MCF 10A (cell line): ENCODE measurements at regions of chr9 and their contacts with region 1.

Region 1: GRCh38 chr9:112333639-112334431 is 416 bp upstream of the PTBP3 start:
- DNase-seq: peak; percentile 94
- H3K4me3 Mint-ChIP-seq: peak overlapping the region; percentile 94
- H3K27ac Mint-ChIP-seq: peak overlapping the region; percentile 94
- H3K4me1 Mint-ChIP-seq: peaks cover 13% of the 10 kb centered on the region
- H3K27me3 Mint-ChIP-seq: no peaks in the 10 kb centered on the region
- CTCF ChIP-seq: peak; percentile 35

Region 2: DNA sequence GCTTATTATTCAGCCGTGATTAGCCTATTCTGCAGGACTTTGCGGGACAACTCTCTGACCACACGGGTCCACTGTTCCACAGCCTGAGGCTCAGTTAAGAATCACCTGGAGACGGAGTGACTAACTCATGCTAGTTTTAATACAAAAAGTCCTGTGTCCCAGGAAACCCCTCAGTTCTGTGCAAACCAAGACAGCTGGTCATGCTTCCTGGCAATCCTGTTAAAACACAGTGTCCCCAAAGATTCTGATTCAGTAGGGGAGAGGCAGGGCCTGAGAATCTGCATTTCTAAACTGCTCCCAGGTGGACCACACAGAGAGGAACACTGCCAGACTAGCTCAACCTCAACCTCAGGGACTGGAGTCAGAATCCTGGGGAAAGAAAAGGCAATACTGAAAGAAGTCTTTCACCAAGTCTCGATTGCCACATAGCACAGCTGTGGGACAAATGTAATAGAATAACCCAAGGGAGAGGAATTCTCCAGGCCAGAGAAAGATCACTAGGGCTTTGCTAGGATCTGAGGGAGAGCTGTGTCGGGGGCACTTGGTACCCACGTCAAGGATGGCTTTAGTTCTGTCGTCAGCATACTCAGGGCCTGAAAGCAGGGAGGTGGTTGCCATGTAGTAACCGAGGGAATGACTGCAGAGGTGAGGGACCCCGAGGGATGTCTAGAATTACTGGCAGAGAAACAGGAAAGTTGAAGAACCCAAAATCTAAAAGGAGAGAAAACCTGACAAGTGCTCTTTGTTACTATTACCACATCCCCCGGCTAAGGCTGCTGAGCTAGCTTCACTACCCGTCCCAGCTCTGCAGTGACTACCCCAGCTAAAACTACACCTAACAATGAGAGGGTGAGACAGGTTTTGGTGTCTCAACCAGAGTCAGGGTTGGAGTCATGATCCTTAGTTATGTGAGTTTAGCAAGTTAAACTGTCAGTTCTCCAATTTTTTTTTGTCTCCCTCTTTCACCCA is 167.4 kb before region 1 on chr9:
- CTCF ChIA-PET with region 1: no interaction called
- POLR2A ChIA-PET with region 1: interaction called, 4 read pairs
- intact Hi-C with region 1: loop called (anchors 1 kb)
- DNase-seq: peak; percentile 66
- H3K4me3 Mint-ChIP-seq: no peak overlapping the region
- H3K27ac Mint-ChIP-seq: peak overlapping the region; percentile 55
- H3K4me1 Mint-ChIP-seq: peaks cover 16% of the 10 kb centered on the region
- H3K27me3 Mint-ChIP-seq: no peaks in the 10 kb centered on the region
- CTCF ChIP-seq: peak; percentile 19

Region 3: GRCh38 chr9:112233768-112234167 is 100.1 kb before region 1 on chr9:
- CTCF ChIA-PET with region 1: interaction called, 4 read pairs
- POLR2A ChIA-PET with region 1: interaction called, 20 read pairs
- intact Hi-C with region 1: loop called (anchors 2 kb)
- DNase-seq: peak; percentile 87
- H3K4me3 Mint-ChIP-seq: no peak overlapping the region
- H3K27ac Mint-ChIP-seq: peak overlapping the region; percentile 81
- H3K4me1 Mint-ChIP-seq: peaks cover 11% of the 10 kb centered on the region
- H3K27me3 Mint-ChIP-seq: no peaks in the 10 kb centered on the region
- CTCF ChIP-seq: no peak

Region 4: GRCh38 chr9:112315331-112316257 is 18.2 kb before region 1 on chr9:
- CTCF ChIA-PET with region 1: interaction called, 4 read pairs
- POLR2A ChIA-PET with region 1: interaction called, 50 read pairs
- intact Hi-C with region 1: no loop called
- DNase-seq: no peak
- H3K4me3 Mint-ChIP-seq: no peak overlapping the region
- H3K27ac Mint-ChIP-seq: no peak overlapping the region
- H3K4me1 Mint-ChIP-seq: peaks cover 12% of the 10 kb centered on the region
- H3K27me3 Mint-ChIP-seq: no peaks in the 10 kb centered on the region
- CTCF ChIP-seq: no peak

Region 5: DNA sequence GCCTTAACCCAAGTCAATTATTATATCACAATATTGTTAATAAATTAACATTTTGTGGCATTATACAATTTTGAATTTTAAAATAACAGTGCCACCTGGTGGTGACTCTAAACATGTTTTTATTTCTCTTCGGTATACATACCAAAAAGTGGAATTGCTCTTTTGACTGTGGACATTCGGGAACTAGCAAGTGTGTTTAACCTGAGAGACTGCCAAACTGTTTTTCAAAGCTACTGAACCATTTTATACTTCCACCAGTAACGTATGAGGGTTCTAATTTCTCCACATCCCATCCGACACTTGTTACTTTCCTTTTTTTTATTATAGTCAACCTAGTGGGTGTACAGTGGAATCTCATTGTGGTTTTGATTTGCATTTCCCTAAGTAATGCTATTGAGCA is 27.8 kb after region 1 on chr9:
- CTCF ChIA-PET with region 1: interaction called, 5 read pairs
- POLR2A ChIA-PET with region 1: interaction called, 4 read pairs
- intact Hi-C with region 1: loop called (anchors 1 kb)
- DNase-seq: peak; percentile 48
- H3K4me3 Mint-ChIP-seq: no peak overlapping the region
- H3K27ac Mint-ChIP-seq: no peak overlapping the region
- H3K4me1 Mint-ChIP-seq: peaks cover 5% of the 10 kb centered on the region
- H3K27me3 Mint-ChIP-seq: no peaks in the 10 kb centered on the region
- CTCF ChIP-seq: peak; percentile 34

Region 6: GRCh38 chr9:112655668-112656067 is 321.8 kb after region 1 on chr9:
- CTCF ChIA-PET with region 1: no interaction called
- POLR2A ChIA-PET with region 1: no interaction called
- intact Hi-C with region 1: no loop called
- DNase-seq: no peak
- H3K4me3 Mint-ChIP-seq: no peak overlapping the region
- H3K27ac Mint-ChIP-seq: no peak overlapping the region
- H3K4me1 Mint-ChIP-seq: no peaks in the 10 kb centered on the region
- H3K27me3 Mint-ChIP-seq: no peaks in the 10 kb centered on the region
- CTCF ChIP-seq: no peak

Region 7: DNA sequence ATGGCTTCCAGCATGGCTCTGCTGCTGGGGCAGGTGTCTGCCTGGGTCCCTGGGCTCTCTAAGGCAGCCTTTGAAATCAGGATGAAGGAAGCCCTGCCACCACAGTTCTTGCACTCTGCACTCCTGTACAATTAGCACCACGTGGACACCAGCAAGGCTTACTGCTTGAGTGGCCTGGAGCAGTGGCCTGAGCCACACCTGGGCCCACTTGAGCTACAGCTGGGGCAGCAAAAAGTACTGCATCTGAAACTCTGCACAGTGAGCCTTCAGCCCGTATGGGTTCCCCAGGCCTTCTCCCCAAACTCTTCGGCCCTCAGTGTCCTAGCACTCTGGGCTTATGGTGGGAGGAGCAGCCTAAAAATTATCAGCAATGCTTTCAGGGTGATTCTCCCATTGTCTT is 392.1 kb after region 1 on chr9:
- CTCF ChIA-PET with region 1: no interaction called
- POLR2A ChIA-PET with region 1: no interaction called
- intact Hi-C with region 1: no loop called
- DNase-seq: no peak
- H3K4me3 Mint-ChIP-seq: no peak overlapping the region
- H3K27ac Mint-ChIP-seq: no peak overlapping the region
- H3K4me1 Mint-ChIP-seq: no peaks in the 10 kb centered on the region
- H3K27me3 Mint-ChIP-seq: no peaks in the 10 kb centered on the region
- CTCF ChIP-seq: no peak